ENCODE measurements at regions of chr16 and their contacts with region 1.

Region 1: GRCh38 chr16:58755989-58756649 is 22.0 kb upstream of the GOT2 start:
- DNase-seq: peak; percentile 67
- ATAC-seq: peak; percentile 99
- H3K4me3 ChIP-seq: no peak overlapping the region
- H3K27ac ChIP-seq: no peak overlapping the region
- H3K4me1 ChIP-seq: no peaks in the 10 kb centered on the region
- H3K27me3 ChIP-seq: peaks cover 8% of the 10 kb centered on the region
- CTCF ChIP-seq: peak; percentile 64
- POLR2A ChIP-seq: no peak
- RAD21 ChIP-seq: peak; percentile 83

Region 2: DNA sequence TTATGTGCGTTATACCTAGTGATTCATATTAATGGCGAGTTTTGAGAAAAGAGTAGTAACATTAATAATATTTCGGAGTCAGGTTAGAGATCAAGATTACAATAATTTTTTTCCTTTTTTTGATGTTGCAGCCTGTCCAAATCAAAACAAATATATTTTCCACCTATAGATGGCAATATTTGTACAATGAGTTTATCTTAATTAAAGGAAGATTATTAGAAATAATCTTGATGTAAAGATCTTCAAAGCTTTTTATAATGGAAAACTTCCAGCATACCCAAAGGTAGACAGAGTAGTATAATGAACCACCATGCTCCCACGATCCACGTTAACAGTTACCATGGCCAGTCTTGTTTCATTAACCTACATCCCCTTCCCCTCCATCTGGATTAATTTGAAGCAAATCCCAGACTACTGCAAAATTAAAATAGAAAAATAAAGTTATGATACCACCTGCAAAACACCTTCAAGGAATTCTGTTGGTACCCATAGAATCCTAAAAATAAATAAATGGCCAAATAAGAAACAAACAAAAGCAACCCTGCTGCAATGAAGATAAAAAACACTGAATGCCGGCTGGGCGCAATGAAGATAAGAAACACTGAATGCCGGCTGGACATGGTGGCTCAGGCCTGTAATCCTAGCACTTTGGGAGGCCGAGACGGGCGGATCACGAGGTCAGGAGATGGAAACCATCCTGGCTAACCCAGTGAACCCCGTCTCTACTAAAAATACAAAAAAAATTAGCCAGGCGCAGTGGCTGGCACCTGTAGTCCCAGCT is 410.4 kb before region 1 on chr16:
- CTCF ChIA-PET with region 1: no interaction called
- POLR2A ChIA-PET with region 1: no interaction called
- dilution Hi-C with region 1: no loop called
- in situ Hi-C with region 1: loop called (anchors 10 kb)
- intact Hi-C with region 1: loop called (anchors 2 kb)
- DNase-seq: no peak
- ATAC-seq: no peak
- H3K4me3 ChIP-seq: no peak overlapping the region
- H3K27ac ChIP-seq: no peak overlapping the region
- H3K4me1 ChIP-seq: no peaks in the 10 kb centered on the region
- H3K27me3 ChIP-seq: peaks cover 10% of the 10 kb centered on the region
- CTCF ChIP-seq: peak; percentile 33
- POLR2A ChIP-seq: no peak
- RAD21 ChIP-seq: peak; percentile 18; the same call in 1 of the 2 replicates

Region 3: DNA sequence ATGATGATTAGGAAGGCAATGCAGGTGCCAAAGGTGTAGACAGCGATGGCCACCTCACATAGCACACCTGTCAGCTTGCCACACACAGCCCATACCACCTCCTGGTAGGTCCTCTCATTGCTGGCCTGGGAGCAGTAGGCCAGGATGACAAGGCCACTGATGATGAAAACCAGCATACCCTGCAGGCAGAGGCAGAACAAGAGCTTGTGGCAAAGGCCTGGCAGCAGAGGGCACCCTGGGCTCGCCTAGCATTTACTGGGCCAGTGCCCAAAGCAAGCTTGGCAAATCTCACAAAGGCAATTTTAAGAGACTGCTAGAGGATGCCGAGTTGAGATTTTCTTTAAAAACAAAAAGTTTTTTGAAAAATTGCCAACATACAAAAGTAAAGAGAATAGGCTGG is 77.4 kb before region 1 on chr16:
- CTCF ChIA-PET with region 1: interaction called, 8 read pairs
- POLR2A ChIA-PET with region 1: no interaction called
- dilution Hi-C with region 1: no loop called
- in situ Hi-C with region 1: no loop called
- intact Hi-C with region 1: loop called (anchors 1 kb)
- DNase-seq: no peak
- ATAC-seq: peak; percentile 59; the same call in 1 of the 2 replicates
- H3K4me3 ChIP-seq: no peak overlapping the region
- H3K27ac ChIP-seq: no peak overlapping the region
- H3K4me1 ChIP-seq: peaks cover 6% of the 10 kb centered on the region
- H3K27me3 ChIP-seq: no peaks in the 10 kb centered on the region
- CTCF ChIP-seq: no peak
- POLR2A ChIP-seq: no peak
- RAD21 ChIP-seq: peak; percentile 20; the same call in 1 of the 2 replicates

Region 4: DNA sequence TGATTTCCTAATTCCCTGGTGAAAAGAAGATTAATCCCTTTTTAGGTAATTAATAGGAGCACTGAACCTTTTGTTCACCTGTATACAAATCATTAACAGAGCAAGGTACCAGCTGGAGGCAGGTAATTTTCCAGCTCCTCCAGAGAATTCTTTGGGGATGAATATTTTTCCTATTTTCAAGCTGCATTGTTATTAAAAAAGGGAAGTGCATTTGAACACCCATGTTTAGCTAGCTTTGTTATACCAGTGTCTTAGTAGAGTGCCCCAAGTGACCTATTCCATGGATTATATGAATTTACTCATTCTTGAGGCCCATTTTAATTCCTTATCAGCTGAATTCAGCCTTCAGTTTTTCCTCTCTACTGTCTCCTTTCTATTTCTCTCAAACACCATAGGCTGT is 51.2 kb after region 1 on chr16:
- CTCF ChIA-PET with region 1: no interaction called
- POLR2A ChIA-PET with region 1: no interaction called
- dilution Hi-C with region 1: no loop called
- in situ Hi-C with region 1: no loop called
- intact Hi-C with region 1: no loop called
- DNase-seq: no peak
- ATAC-seq: no peak
- H3K4me3 ChIP-seq: no peak overlapping the region
- H3K27ac ChIP-seq: no peak overlapping the region
- H3K4me1 ChIP-seq: no peaks in the 10 kb centered on the region
- H3K27me3 ChIP-seq: no peaks in the 10 kb centered on the region
- CTCF ChIP-seq: no peak
- POLR2A ChIP-seq: no peak
- RAD21 ChIP-seq: no peak

Measured in IMR-90 (cell line).